ENCODE measurements at regions of chr7 and their contacts with region 1.

Region 1: DNA sequence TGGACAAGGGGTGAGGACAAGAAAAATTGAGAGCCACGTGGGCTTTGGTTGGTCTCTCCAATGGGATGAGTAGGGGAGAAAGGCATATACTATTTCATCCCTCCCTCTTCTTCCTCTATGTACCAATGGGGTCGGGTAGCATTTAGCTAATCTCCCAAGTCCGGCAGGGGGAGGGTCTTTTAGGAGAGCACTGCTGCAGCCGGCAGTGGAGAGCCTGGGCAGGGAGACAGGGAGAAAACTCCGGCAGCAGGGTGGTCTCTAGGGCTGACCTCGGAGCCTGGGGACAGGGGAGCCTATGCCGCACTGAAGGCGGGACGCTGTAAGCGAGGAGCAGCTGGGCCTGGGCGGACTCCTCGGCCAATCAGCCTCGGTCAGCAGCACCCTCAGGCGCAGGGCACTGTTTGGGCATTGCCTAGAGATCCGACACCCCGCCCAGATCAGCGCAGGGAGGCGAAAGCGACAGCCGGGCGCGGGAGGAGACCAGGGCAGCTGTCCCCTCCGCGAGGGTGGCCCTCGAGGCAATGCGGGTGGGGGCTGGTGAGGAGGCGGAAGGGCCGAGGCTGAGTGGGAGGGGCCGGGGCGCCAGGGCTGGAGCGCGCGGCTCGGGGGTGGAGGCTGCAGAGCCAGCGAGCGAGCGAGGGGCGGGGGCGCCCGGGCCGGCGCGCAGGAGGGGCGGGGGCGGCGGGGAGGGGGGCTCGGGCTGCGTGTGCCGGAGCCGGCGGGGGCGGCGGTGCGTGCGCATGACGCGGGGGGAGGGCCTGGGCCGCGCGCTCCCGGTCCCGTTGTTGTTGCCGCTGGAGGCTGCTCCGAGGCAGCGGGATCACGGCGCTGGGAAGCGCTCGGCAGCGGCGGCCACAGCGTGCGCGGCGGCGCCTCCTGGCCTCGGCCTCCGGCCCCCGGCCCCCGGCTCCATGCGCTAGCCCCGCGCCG is at the start of gene AGAP3:
- DNase-seq: peak; percentile 94
- ATAC-seq: peak; percentile 66
- total RNA-seq, gene AGAP3: 57.4 TPM

Region 2: GRCh38 chr7:151057989-151058780 is 27.8 kb before region 1 on chr7:
- intact Hi-C with region 1: loop called (anchors 2 kb)
- DNase-seq: peak; percentile 99
- ATAC-seq: peak; percentile 93

Region 3: DNA sequence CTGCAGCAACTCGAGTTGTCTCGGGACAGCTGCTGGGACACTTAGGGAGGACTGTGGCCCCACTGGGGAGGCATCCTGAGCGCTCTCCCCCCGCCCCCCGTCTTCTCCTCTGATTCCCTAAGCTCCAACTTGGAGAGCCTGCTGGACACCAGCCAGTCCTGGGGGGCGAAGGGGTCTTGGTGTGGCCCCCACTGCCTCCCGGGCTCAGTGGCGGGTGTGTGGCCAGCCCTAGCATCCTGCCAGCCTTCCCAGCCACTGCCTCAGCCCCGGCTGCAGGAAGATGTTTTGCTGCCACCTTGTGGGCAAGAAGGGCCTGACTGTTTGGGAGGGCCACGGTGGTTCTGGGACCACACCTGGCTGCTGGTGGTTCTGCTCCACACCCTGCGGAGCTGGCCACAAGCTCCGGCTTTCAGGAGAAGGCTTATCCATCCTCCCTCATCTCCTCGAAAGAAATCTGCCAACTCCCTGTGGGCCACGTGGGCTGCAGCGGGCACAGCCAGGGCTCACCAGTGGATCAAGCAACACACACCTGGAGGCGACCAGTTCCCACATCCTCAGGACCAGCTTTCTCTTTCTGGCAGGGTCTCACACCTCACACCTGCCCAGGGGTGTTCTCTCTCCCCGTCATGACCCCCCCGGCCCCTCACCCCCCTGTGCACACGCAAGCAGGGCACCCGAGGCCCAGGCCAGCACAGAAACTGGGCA is 25.1 kb after region 1 on chr7:
- intact Hi-C with region 1: loop called (anchors 1 kb)
- DNase-seq: peak; percentile 88
- ATAC-seq: peak; percentile 79

Region 4: DNA sequence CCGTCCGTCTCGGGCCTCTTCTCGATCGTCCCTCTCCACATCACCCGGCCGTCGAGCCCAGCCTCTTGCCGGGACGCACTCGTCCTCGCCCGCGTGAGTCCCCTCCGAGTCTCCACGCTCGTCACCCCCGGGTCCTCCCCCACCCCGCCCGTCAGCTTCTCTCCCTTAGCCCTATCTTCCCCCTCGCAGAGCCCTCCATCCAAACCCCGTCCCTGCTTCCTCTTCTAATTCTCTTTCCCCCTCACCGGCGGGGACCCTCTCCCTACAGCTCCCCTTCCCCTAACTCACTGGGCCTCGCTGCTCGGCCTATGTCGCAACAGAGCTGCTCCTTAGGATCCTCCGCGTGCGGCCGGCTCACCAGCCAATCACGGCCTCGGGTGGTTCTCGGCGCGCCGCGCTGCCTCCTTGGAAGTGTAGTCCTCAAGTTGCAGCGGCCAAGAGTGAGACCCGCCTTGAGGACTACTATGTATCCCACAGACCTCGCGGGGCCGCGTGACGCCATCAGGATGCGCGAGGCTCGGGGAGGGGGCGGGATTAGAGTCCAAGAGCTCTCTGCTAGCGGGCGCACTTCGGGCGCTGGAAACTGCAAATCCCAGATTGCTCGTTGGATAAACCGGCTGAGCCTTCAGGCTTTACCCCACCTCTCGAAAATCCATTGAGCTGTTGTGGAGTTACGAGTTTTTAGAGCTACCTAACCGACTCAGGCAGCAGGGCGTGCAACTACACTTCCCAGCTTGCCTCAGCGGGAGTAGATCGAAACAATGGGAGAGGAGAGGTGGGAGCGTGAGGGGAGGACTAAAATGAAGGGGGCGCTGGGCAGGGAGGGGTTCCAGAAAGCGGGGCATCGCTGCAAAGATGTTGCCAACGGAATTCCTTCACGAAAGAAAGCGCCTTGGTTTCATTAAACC is 141.2 kb after region 1 on chr7 and contains the start of gene ABCF2:
- intact Hi-C with region 1: loop called (anchors 2 kb)
- DNase-seq: peak; percentile 100
- ATAC-seq: peak; percentile 100
- total RNA-seq, gene ABCF2: 24.5 TPM